CD8-positive, alpha-beta T cell (primary cell): ENCODE measurements at regions of chr17 and their contacts with region 1.

Region 1: GRCh38 chr17:38868817-38869525 is 887 bp upstream of the LASP1 start:
- DNase-seq: peak; percentile 77 to 92 (median 88)
- ATAC-seq: peak; percentile 51
- H3K4me3 ChIP-seq: peak overlapping the region; percentile 99 to 100
- H3K4me3 Mint-ChIP-seq: peak overlapping the region; percentile 99
- H3K27ac ChIP-seq: peak overlapping the region; percentile 79 to 84
- H3K27ac Mint-ChIP-seq: peak overlapping the region; percentile 97
- H3K4me1 ChIP-seq: peaks cover 40% of the 10 kb centered on the region
- H3K4me1 Mint-ChIP-seq: peaks cover 52% of the 10 kb centered on the region
- H3K27me3 ChIP-seq: no peaks in the 10 kb centered on the region
- H3K27me3 Mint-ChIP-seq: no peaks in the 10 kb centered on the region
- CTCF ChIP-seq: no peak

Region 2: DNA sequence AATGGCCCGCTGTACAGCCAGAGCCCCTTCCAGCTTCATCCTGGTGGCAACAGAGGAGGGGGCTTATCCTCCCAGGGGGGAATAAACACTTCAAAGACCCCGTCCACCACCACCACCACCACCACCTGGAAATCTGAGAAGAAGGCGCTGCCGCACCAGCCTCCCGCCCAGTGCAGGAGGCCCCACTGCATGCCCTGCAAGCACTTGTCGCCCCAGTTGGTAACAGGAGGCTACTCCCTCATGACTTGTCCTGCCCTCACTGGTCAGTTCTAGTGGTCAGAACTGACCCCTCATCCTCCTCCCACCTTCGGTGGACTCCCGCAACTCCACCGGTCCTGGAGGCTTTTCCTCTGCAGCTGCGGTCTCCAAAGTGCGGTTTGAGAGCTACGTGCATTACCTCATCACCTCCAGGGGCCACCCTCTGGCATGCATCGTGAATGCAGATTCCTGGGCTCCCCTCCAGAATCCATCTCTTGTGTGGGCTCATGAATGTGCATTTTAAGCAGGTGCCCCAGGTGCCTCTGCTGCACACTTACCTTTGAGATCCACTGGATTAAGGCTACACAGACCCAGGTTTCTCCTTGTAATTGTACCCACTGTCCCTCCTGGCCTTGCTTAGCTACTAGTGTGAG is 335.0 kb before region 1 on chr17:
- CTCF ChIA-PET with region 1: no interaction called
- POLR2A ChIA-PET with region 1: no interaction called
- intact Hi-C with region 1: no loop called
- DNase-seq: no peak
- ATAC-seq: no peak
- H3K4me3 ChIP-seq: no peak overlapping the region
- H3K4me3 Mint-ChIP-seq: no peak overlapping the region
- H3K27ac ChIP-seq: no peak overlapping the region
- H3K27ac Mint-ChIP-seq: no peak overlapping the region
- H3K4me1 ChIP-seq: no peaks in the 10 kb centered on the region
- H3K4me1 Mint-ChIP-seq: no peaks in the 10 kb centered on the region
- H3K27me3 ChIP-seq: no peaks in the 10 kb centered on the region
- H3K27me3 Mint-ChIP-seq: peaks cover 31% of the 10 kb centered on the region
- CTCF ChIP-seq: no peak

Region 3: DNA sequence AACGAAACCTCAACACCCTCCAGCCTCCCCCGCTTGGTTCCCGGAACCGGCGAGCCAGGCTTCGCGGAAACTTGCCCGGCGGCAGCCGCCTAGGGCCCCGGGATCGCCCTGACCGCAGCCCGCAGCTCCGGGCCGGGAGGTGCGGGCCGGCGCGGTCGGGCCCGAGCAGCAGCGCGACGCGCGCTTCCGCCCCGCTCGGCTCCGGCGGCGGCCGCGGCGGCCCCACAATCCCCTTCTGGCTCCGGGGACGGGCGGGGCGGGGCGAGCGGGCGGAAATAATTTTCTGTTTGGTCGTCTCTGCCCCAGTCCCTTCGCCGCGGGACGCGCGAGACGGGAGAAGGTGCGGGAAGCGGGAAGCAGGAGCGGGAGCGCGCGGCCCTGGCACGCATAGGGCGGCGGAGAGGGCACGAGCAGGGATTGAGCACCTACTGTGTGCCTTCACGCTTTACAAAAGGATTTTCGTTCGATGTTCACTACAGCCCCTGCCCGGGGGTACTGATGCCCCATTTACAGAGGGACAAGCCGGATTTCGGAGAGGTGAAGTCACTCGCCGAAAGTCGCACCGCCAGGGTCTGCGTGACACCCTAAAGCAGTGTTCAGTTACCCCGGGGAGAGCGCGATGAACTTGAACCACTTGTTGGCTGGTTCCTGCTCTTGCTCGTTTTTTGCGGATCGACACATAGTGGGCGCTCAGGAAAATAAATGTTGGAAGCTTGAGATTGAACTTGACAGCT is 166.6 kb before region 1 on chr17:
- CTCF ChIA-PET with region 1: no interaction called
- POLR2A ChIA-PET with region 1: no interaction called
- intact Hi-C with region 1: loop called in 1 of 2 experiments (anchors 5 kb)
- DNase-seq: peak; percentile 58 to 91 (median 78)
- ATAC-seq: peak; percentile 27
- H3K4me3 ChIP-seq: peak overlapping the region; percentile 96 to 97
- H3K4me3 Mint-ChIP-seq: peak overlapping the region; percentile 99
- H3K27ac ChIP-seq: peak overlapping the region; percentile 70 to 94
- H3K27ac Mint-ChIP-seq: peak overlapping the region; percentile 97
- H3K4me1 ChIP-seq: peaks cover 33% of the 10 kb centered on the region
- H3K4me1 Mint-ChIP-seq: peaks cover 51% of the 10 kb centered on the region
- H3K27me3 ChIP-seq: no peaks in the 10 kb centered on the region
- H3K27me3 Mint-ChIP-seq: no peaks in the 10 kb centered on the region
- CTCF ChIP-seq: no peak

Region 4: DNA sequence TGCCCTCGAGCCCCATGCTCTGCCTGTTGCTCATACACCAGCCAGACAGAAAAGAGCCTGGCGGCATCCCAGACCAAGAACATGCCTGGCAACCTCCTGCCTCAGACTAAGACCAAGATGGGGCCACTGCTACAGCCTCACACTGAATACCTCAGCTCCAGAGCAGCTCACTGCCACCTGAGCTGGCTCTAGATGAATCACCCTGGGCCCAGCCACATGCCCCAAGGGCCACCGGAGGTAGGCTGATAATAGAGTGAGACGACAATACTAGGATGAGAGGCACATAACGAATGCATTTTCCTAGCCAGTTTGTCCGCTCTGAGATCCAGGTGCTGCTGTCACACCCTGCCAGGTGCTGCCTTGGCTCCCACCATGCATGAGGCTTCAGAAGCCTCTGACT is 82.6 kb before region 1 on chr17:
- CTCF ChIA-PET with region 1: no interaction called
- POLR2A ChIA-PET with region 1: no interaction called
- intact Hi-C with region 1: no loop called
- DNase-seq: no peak
- ATAC-seq: no peak
- H3K4me3 ChIP-seq: no peak overlapping the region
- H3K4me3 Mint-ChIP-seq: no peak overlapping the region
- H3K27ac ChIP-seq: no peak overlapping the region
- H3K27ac Mint-ChIP-seq: no peak overlapping the region
- H3K4me1 ChIP-seq: no peaks in the 10 kb centered on the region
- H3K4me1 Mint-ChIP-seq: peaks cover 9% of the 10 kb centered on the region
- H3K27me3 ChIP-seq: no peaks in the 10 kb centered on the region
- H3K27me3 Mint-ChIP-seq: no peaks in the 10 kb centered on the region
- CTCF ChIP-seq: no peak

Region 5: GRCh38 chr17:38824899-38825761 is 43.8 kb before region 1 on chr17 and contains the start of gene CWC25:
- CTCF ChIA-PET with region 1: no interaction called
- POLR2A ChIA-PET with region 1: interaction called, 6 read pairs
- intact Hi-C with region 1: loop called (anchors 1 kb)
- DNase-seq: peak; percentile 92 to 100 (median 97)
- ATAC-seq: peak; percentile 80
- H3K4me3 ChIP-seq: peak within 1 kb of the TSS; percentile 65 to 88
- H3K4me3 Mint-ChIP-seq: peak within 1 kb of the TSS; percentile 99
- H3K27ac ChIP-seq: peak within 1 kb of the TSS; percentile 97 to 98
- H3K27ac Mint-ChIP-seq: peak within 1 kb of the TSS; percentile 100
- H3K4me1 ChIP-seq: peaks cover 23% of the 10 kb centered on the region
- H3K4me1 Mint-ChIP-seq: peaks cover 35% of the 10 kb centered on the region
- H3K27me3 ChIP-seq: no peaks in the 10 kb centered on the region
- H3K27me3 Mint-ChIP-seq: no peaks in the 10 kb centered on the region
- CTCF ChIP-seq: no peak
- total RNA-seq, gene CWC25: 80.3 to 87.5 TPM

Region 6: DNA sequence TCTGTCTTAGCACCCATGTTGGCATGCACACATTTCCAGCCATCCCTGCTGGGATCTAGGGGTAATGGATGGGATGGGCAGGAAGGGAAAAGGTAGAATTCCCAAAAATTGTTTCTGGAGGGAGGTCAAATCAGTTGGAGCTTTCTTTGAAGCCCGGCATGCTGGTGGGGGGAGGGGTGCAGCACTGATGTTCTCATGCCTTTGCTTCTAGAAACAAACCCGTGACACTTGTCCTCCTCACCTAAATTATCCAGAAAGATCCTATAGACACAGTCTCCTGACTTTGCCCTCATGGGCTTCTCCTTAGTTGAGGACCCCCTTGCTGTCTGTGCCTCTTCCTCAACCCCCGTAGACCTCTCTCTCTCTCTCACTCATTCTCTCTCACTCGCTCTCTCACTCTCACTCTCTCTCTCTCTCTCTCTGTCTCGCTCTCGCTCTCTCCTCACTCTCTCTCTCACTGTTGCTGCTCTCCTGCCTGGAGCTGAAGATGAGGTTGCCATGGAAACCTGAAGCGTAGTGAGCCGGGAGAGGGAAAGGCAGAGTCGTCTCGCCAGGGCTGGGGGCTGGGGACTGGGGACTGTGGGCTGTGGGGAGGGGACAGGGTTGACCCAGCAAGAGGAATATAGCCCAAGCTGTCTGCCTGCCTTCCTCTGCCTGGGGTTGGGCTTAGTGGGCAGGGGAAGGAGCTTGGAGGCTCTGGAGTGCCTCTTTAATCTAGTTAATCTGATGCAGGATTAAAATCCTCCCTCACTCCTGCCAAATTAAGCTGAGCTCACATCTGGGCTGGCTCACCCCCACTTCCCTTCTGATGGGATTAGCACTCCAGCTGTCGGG is 17.0 kb after region 1 on chr17:
- CTCF ChIA-PET with region 1: interaction called, 6 read pairs
- POLR2A ChIA-PET with region 1: interaction called, 15 read pairs
- intact Hi-C with region 1: no loop called
- DNase-seq: peak in 1 of 9 experiments; percentile 59
- ATAC-seq: peak; percentile 7
- H3K4me3 ChIP-seq: peak overlapping the region in 1 of 2 experiments; percentile 1
- H3K4me3 Mint-ChIP-seq: peak overlapping the region; percentile 69
- H3K27ac ChIP-seq: peak overlapping the region; percentile 1 to 49
- H3K27ac Mint-ChIP-seq: peak overlapping the region; percentile 90
- H3K4me1 ChIP-seq: peaks cover 97% of the 10 kb centered on the region
- H3K4me1 Mint-ChIP-seq: peaks cover 91% of the 10 kb centered on the region
- H3K27me3 ChIP-seq: no peaks in the 10 kb centered on the region
- H3K27me3 Mint-ChIP-seq: no peaks in the 10 kb centered on the region
- CTCF ChIP-seq: no peak

Region 7: GRCh38 chr17:38922538-38923297 is 53.7 kb after region 1 on chr17:
- CTCF ChIA-PET with region 1: interaction called, 20 read pairs
- POLR2A ChIA-PET with region 1: interaction called, 34 read pairs
- intact Hi-C with region 1: loop called (anchors 2 kb)
- DNase-seq: peak in 2 of 9 experiments; percentile 9 to 48
- ATAC-seq: no peak
- H3K4me3 ChIP-seq: no peak overlapping the region
- H3K4me3 Mint-ChIP-seq: no peak overlapping the region
- H3K27ac ChIP-seq: peak overlapping the region in 1 of 2 experiments; percentile 51
- H3K27ac Mint-ChIP-seq: peak overlapping the region; percentile 66
- H3K4me1 ChIP-seq: peaks cover 26% of the 10 kb centered on the region
- H3K4me1 Mint-ChIP-seq: peaks cover 45% of the 10 kb centered on the region
- H3K27me3 ChIP-seq: no peaks in the 10 kb centered on the region
- H3K27me3 Mint-ChIP-seq: no peaks in the 10 kb centered on the region
- CTCF ChIP-seq: no peak

Region 8: DNA sequence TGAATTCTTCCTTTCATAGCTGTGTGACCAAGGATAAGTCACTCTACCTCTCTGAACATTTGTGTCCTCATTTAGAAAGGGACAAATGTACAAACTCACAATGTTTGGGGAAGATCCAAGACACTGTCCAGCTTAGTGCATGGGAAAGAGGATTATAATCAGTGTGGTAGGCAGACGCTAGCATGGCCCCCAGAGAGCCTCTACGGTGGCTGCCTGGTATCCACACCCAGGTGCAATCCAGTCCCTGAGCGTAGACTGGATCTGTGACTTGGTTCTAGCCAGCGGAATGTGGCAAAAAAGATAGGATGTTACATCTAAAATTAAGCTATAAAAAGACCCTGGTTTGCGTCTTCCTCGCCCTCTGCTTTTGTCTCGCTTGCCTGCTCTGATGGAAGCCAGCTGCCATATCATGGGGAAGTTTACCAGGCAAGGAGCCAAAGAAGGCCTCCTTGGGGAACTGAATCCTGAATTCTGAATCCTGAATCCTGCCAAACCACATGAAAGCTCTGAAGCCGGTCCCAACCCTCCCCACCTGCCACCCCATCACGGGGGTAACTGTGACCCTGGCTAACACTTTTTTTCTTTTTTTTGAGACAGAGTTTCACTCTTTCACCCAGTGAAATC is 230.8 kb after region 1 on chr17:
- CTCF ChIA-PET with region 1: no interaction called
- POLR2A ChIA-PET with region 1: no interaction called
- intact Hi-C with region 1: loop called in 1 of 2 experiments (anchors 10 kb)
- DNase-seq: no peak
- ATAC-seq: no peak
- H3K4me3 ChIP-seq: no peak overlapping the region
- H3K4me3 Mint-ChIP-seq: no peak overlapping the region
- H3K27ac ChIP-seq: no peak overlapping the region
- H3K27ac Mint-ChIP-seq: no peak overlapping the region
- H3K4me1 ChIP-seq: peaks cover 65% of the 10 kb centered on the region
- H3K4me1 Mint-ChIP-seq: peaks cover 71% of the 10 kb centered on the region
- H3K27me3 ChIP-seq: no peaks in the 10 kb centered on the region
- H3K27me3 Mint-ChIP-seq: no peaks in the 10 kb centered on the region
- CTCF ChIP-seq: no peak